Gastrocnemius medialis (tissue), 4 donors: ENCODE measurements at regions of chr6 and their contacts with region 1.

Region 1: GRCh38 chr6:41545703-41546474 is at the start of gene FOXP4:
- DNase-seq: peak; percentile 86 to 87
- ATAC-seq: peak; percentile 90 to 91
- H3K4me3 ChIP-seq: peak within 1 kb of the TSS; percentile 64 to 82 (median 69)
- H3K27ac ChIP-seq: peak within 1 kb of the TSS; percentile 72 to 89 (median 79)
- H3K4me1 ChIP-seq: peaks cover 21 to 45% of the 10 kb centered on the region in 2 donors
- H3K27me3 ChIP-seq: no peaks in the 10 kb centered on the region
- CTCF ChIP-seq: no peak
- POLR2A ChIP-seq: no peak
- total RNA-seq, gene FOXP4: 3.4 to 11.4 (median 6.5) TPM

Region 2: DNA sequence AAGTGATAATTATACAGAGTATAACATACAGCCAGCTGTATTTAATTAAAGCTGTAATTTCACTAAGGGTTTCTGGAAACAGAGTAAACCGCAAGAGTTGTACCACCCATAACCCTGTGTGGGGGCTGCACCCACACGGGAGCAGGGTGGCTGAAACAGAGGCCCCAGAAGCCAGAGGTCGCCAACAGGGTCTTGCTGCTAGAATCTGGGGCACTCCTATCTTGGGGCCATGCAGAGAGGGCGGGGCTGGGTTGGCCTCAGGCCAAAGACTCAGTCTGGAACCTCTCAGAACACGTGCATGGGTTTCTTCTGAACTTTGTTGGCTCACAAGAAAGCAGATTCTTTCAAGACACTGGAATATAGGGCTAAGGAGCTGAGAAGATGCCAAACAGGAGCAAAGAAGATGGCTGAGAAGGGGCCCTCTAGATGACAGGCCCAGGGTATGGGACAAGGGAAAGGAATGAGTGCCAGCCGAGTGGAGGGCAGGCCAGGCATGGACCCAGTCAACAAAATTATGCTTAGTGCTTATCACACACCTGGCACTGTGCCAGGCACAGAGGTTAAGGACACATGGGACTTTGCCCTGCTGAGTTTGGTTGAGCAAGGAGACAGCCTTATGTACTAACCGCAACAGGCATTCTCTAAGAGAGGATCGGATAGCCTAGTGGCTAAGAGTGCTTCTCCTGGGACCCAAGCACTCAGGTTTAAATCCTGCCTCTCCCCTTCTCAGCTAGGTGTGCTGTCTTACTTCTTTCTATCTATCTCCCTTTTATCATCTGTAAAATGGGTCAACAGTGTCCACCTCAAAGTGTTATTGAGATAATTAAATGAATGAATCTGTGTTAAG is 96.3 kb before region 1 on chr6:
- in situ Hi-C with region 1: no loop called
- intact Hi-C with region 1: loop called (anchors 5 kb)
- DNase-seq: peak in 1 of 2 donors; percentile 69
- ATAC-seq: peak; percentile 48 to 66
- H3K4me3 ChIP-seq: no peak overlapping the region
- H3K27ac ChIP-seq: peak overlapping the region; percentile 31 to 88 (median 60)
- H3K4me1 ChIP-seq: peaks cover 20 to 25% of the 10 kb centered on the region in 2 donors
- H3K27me3 ChIP-seq: no peaks in the 10 kb centered on the region
- CTCF ChIP-seq: no peak
- POLR2A ChIP-seq: no peak

Region 3: GRCh38 chr6:41505122-41506049 is 40.5 kb before region 1 on chr6:
- in situ Hi-C with region 1: no loop called
- intact Hi-C with region 1: loop called (anchors 5 kb)
- DNase-seq: peak; percentile 33 to 51
- ATAC-seq: peak; percentile 50 to 64
- H3K4me3 ChIP-seq: peak overlapping the region; percentile 40 to 50 (median 47)
- H3K27ac ChIP-seq: peak overlapping the region in 3 of 4 donors; percentile 64 to 76 (median 66)
- H3K4me1 ChIP-seq: peaks cover 6 to 21% of the 10 kb centered on the region in 2 donors
- H3K27me3 ChIP-seq: peaks cover 21 to 32% (median 30%) of the 10 kb centered on the region in 3 donors
- CTCF ChIP-seq: no peak
- POLR2A ChIP-seq: no peak

Region 4: GRCh38 chr6:41591859-41592502 is 46.1 kb after region 1 on chr6:
- in situ Hi-C with region 1: no loop called
- intact Hi-C with region 1: loop called (anchors 5 kb)
- DNase-seq: peak; percentile 32 to 59
- ATAC-seq: peak; percentile 80 to 88
- H3K4me3 ChIP-seq: no peak overlapping the region
- H3K27ac ChIP-seq: no peak overlapping the region
- H3K4me1 ChIP-seq: no peaks in the 10 kb centered on the region
- H3K27me3 ChIP-seq: no peaks in the 10 kb centered on the region
- CTCF ChIP-seq: peak; percentile 90 to 95 (median 92)
- POLR2A ChIP-seq: no peak

Region 5: GRCh38 chr6:41683510-41684310 is 137.8 kb after region 1 on chr6:
- in situ Hi-C with region 1: no loop called
- intact Hi-C with region 1: loop called (anchors 5 kb)
- DNase-seq: peak; percentile 51 to 69
- ATAC-seq: peak; percentile 57 to 67
- H3K4me3 ChIP-seq: peak overlapping the region; percentile 40 to 61 (median 50)
- H3K27ac ChIP-seq: peak overlapping the region; percentile 52 to 67 (median 58)
- H3K4me1 ChIP-seq: peaks cover 13 to 14% of the 10 kb centered on the region in 2 donors
- H3K27me3 ChIP-seq: no peaks in the 10 kb centered on the region
- CTCF ChIP-seq: peak; percentile 78 to 95 (median 90)
- POLR2A ChIP-seq: no peak